ENCODE measurements at regions of chr9 and their contacts with region 1.

Region 1: GRCh38 chr9:107172160-107172978 is 110.7 kb upstream of the RAD23B start:
- DNase-seq: no peak

Region 2: DNA sequence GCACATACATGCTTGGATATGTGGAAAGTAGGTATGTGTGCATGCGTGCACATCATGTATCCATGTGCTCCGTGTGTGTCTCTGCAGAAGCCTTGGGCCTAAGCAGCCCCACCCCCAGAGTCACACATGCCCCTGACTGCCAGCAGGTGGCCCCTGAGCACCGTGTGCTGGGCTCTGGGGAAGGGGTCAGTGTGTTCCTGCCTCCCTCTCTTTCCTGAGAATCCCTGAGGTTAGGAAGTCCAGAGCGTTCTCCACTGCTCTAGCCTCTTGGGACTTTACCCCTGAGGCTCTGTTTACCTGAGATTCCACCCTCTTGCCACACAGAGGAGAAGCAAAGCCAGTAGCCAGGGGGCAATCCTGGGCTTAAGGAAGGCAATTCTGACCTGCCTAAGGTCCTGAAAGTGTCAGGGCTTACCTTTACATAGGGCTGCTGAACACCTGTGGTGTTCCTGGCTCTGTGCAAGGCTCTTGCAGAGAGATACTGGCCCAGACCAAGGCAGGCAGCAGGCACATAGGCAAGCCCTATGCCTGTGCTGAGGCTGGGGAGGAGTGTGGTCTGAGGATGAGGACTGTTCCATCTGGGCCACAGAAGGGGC is 1270.8 kb before region 1 on chr9:
- intact Hi-C with region 1: loop called (anchors 10 kb)
- DNase-seq: no peak

Region 3: GRCh38 chr9:107213561-107214028 is 41.2 kb after region 1 on chr9:
- intact Hi-C with region 1: no loop called
- DNase-seq: no peak

Region 4: DNA sequence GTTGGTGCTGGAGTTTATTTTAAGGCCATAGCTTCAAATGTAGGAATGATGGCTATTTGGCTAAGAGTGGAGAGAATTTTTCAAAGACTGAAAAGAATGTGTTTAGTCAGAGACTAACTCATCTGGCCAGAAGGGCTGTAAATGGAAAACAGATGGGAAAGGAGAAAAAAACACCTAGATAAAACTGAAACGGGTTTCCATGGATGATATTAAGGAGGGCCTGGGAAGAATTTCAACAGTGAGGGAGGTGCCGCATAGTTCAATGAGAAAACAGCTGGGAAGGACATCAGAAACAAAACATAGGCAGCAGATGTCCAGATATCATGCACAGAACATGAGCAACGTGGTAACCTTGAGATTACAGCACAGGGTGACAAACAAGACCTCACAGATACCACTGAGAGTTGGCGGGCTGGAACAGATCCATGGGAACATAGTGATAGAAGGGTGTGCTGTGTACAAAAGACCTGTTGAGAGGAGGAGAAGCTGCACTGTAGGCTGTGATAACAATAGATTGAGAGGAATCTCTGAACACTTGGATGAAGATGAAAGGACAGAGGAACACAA is 79.5 kb after region 1 on chr9:
- intact Hi-C with region 1: loop called (anchors 5 kb)
- DNase-seq: no peak

Region 5: DNA sequence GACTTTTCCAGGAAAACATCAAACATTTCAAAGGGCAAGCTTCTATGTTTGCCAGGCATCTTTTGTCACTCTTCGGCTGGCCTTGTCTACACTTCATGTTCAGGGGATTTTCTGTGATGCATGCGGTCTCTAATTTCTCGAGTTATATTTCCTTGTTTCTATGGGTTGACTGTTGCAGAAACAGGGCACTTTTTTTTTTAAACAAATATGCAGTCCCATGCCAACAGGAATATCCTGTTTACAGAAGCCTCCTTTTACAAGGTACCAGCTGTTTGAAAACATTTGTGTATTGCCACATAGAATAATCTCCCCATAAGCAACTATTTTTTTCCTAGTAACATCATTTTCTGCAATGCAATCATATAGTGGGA is 260.3 kb after region 1 on chr9:
- intact Hi-C with region 1: no loop called
- DNase-seq: no peak